Activated CD4-positive, alpha-beta T cell treated with anti-CD3 and anti-CD28 coated beads, Interleukin-2, amount 10 ng/mL, durations not matched to agents 24 days and 14 days (primary cell): ENCODE measurements at regions of chr22 and their contacts with region 1.

Region 1: GRCh38 chr22:23012081-23012622 is 58.2 kb upstream of the GNAZ start:
- DNase-seq: peak; percentile 77
- H3K4me3 Mint-ChIP-seq: peak overlapping the region; percentile 39
- H3K27ac Mint-ChIP-seq: peak overlapping the region; percentile 57
- H3K4me1 Mint-ChIP-seq: peaks cover 20% of the 10 kb centered on the region
- H3K27me3 Mint-ChIP-seq: peaks cover 43% of the 10 kb centered on the region

Region 2: DNA sequence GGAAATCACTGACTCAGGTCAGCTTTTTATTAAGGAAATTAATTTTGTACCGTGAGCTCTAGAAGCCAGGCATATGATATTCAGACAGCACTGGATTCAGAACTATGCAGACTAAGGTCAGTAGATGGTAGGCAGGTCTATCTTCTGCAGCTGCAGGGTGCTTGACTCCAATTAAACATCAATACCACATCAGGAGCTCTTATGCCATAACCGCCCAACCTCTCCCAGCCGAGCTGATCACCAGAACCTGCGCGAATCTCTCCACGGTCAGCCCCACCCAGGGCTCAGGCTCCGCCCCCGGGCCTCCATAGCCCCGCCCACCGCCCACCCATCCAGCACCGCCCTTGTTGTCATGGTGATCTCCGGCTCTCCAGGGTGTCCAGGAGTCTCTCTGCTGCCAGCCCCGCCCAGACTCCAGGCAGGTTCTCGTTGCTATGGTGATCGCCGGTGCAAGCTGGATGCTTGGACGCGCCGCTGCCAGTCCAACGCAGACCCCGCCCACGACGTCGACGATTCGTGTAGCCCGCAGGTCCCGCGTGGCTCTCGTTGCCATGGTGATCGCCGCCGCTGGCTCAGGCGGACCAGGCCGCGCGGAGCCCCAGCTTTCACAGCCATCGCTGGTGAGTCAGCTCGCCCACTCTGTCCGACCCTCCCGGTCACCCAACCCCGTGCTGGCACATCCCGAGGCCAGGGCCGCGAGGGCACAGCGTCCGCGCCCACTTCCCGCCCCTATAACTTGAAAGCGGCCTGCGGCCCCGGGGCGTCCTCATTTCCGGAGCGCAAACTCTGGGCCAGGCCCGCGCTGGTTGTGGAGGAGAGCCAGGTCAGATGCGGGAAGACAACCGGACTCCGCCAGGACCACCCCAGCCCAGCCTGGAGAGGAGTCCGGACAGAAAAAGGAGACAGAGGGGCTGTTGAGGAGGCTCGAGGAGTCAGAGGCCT is 133.1 kb after region 1 on chr22 and contains the start of gene RAB36:
- intact Hi-C with region 1: loop called (anchors 5 kb)
- DNase-seq: peak; percentile 97
- H3K4me3 Mint-ChIP-seq: peak within 1 kb of the TSS; percentile 78
- H3K27ac Mint-ChIP-seq: peak within 1 kb of the TSS; percentile 75
- H3K4me1 Mint-ChIP-seq: peaks cover 30% of the 10 kb centered on the region
- H3K27me3 Mint-ChIP-seq: peaks cover 4% of the 10 kb centered on the region
- total RNA-seq, gene RAB36: not detected in 2 replicates